ENCODE measurements at regions of chr16 and their contacts with region 1.

Region 1: GRCh38 chr16:74275002-74275636 is 21.5 kb upstream of the PSMD7 start:
- DNase-seq: peak in 1 of 2 experiments; percentile 45
- H3K4me3 ChIP-seq: no peak overlapping the region
- H3K27ac ChIP-seq: no peak overlapping the region
- H3K4me1 ChIP-seq: no peaks in the 10 kb centered on the region
- H3K27me3 ChIP-seq: peaks cover 70% of the 10 kb centered on the region
- CTCF ChIP-seq: peak; percentile 75

Region 2: GRCh38 chr16:73268366-73268993 is 1006.6 kb before region 1 on chr16:
- CTCF ChIA-PET with region 1: no interaction called
- POLR2A ChIA-PET with region 1: interaction called, 19 read pairs
- intact Hi-C with region 1: no loop called
- DNase-seq: no peak
- H3K4me3 ChIP-seq: no peak overlapping the region
- H3K27ac ChIP-seq: no peak overlapping the region
- H3K4me1 ChIP-seq: no peaks in the 10 kb centered on the region
- H3K27me3 ChIP-seq: peaks cover 74% of the 10 kb centered on the region
- CTCF ChIP-seq: no peak

Region 3: DNA sequence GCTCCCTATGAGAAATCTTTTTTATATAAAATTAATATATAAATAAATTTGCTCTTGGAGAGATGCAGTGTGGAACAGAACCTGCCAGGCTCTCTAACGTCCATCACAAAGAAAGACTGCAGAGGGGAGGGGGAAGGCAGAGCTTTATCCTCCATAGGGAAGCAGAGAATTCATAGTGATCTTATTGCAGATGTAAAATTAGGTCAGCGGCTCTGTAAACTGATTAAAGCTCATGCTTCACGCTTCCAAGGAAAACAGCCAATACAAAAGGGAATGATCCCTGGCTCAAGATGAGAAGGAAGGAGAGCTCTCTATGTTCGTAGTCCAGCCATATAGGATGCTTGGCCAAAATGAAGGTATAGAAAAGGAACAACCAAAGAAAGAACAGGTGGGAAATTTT is 510.8 kb before region 1 on chr16:
- CTCF ChIA-PET with region 1: no interaction called
- POLR2A ChIA-PET with region 1: no interaction called
- intact Hi-C with region 1: no loop called
- DNase-seq: no peak
- H3K4me3 ChIP-seq: no peak overlapping the region
- H3K27ac ChIP-seq: no peak overlapping the region
- H3K4me1 ChIP-seq: no peaks in the 10 kb centered on the region
- H3K27me3 ChIP-seq: peaks cover 11% of the 10 kb centered on the region; the same call in 1 of the 2 replicates
- CTCF ChIP-seq: no peak

Region 4: GRCh38 chr16:73976644-73977043 is 298.5 kb before region 1 on chr16:
- CTCF ChIA-PET with region 1: no interaction called
- POLR2A ChIA-PET with region 1: no interaction called
- intact Hi-C with region 1: loop called (anchors 10 kb)
- DNase-seq: no peak
- H3K4me3 ChIP-seq: no peak overlapping the region
- H3K27ac ChIP-seq: no peak overlapping the region
- H3K4me1 ChIP-seq: no peaks in the 10 kb centered on the region
- H3K27me3 ChIP-seq: peaks cover 47% of the 10 kb centered on the region
- CTCF ChIP-seq: no peak

Region 5: GRCh38 chr16:74261068-74261467 is 14.1 kb before region 1 on chr16:
- CTCF ChIA-PET with region 1: no interaction called
- POLR2A ChIA-PET with region 1: no interaction called
- intact Hi-C with region 1: no loop called
- DNase-seq: no peak
- H3K4me3 ChIP-seq: no peak overlapping the region
- H3K27ac ChIP-seq: no peak overlapping the region
- H3K4me1 ChIP-seq: no peaks in the 10 kb centered on the region
- H3K27me3 ChIP-seq: peaks cover 91% of the 10 kb centered on the region
- CTCF ChIP-seq: no peak